Psoas muscle (tissue), 8 donors: ENCODE measurements at regions of chr1 and their contacts with region 1.

Region 1: GRCh38 chr1:15847100-15847892 is at the start of gene SPEN:
- DNase-seq: peak; percentile 99 to 100
- ATAC-seq: peak; percentile 87 to 93 (median 88)
- H3K4me3 ChIP-seq: peak within 1 kb of the TSS; percentile 95
- H3K27ac ChIP-seq: peak within 1 kb of the TSS; percentile 99
- H3K4me1 ChIP-seq: peaks cover 36% of the 10 kb centered on the region
- H3K27me3 ChIP-seq: no peaks in the 10 kb centered on the region
- CTCF ChIP-seq: no peak
- total RNA-seq, gene SPEN: 38.3 to 46.5 (median 44.7) TPM

Region 2: DNA sequence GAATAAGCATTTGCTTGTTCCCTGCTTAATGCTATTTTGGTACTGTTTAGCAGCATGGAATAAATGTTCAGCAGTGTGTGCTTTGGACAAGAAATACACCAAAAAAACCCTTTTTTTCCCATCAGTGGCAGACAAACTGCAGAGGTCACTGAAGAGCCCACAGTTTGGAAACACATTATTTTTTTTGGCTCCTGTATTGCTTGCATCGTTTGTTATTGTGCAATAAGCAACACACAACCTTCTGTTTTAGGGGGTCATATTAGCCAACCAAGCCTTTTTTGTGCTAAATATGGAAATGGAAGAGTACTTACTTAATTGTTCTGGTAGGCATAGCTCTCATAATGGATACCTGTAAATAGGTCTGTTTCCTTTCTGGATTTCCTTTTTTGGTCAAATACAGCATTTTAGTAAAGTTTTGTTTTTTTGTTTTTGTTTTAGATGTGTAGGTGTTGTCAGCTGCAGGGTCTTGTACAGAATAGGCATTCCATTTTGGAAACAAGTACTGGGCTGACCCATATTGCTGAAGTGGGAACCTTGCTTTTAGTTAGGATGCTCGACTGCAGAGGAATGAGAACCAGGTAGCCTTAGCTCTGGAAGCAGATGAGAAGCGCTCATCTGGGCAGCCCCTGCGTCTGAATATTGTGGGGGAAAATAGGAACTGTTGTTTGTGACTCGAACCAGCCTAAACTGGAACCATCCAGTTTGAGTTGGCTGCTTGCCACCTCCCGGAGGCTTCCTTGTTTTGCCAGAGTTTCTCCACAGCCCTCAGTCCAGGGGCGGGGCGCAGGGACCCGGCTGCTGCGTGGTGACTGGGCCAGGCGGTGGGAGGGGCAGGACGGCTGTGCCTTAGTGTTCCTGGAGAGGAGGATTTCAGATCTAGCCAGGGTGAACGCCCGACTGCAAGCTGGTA is 38.7 kb after region 1 on chr1:
- intact Hi-C with region 1: loop called (anchors 5 kb)
- DNase-seq: peak; percentile 97 to 98
- ATAC-seq: peak; percentile 90 to 94 (median 94)
- H3K4me3 ChIP-seq: peak overlapping the region; percentile 61
- H3K27ac ChIP-seq: peak overlapping the region; percentile 88
- H3K4me1 ChIP-seq: peaks cover 62% of the 10 kb centered on the region
- H3K27me3 ChIP-seq: no peaks in the 10 kb centered on the region
- CTCF ChIP-seq: no peak

Region 3: GRCh38 chr1:15902882-15903281 is 55.6 kb after region 1 on chr1:
- intact Hi-C with region 1: loop called (anchors 5 kb)
- DNase-seq: no peak
- ATAC-seq: peak; percentile 85 to 87 (median 85)
- H3K4me3 ChIP-seq: peak overlapping the region; percentile 43
- H3K27ac ChIP-seq: peak overlapping the region; percentile 91
- H3K4me1 ChIP-seq: peaks cover 76% of the 10 kb centered on the region
- H3K27me3 ChIP-seq: no peaks in the 10 kb centered on the region
- CTCF ChIP-seq: no peak